ENCODE measurements at regions of chr17 and their contacts with region 1.

Region 1: GRCh38 chr17:48335858-48336500 is 94.0 kb downstream of the SKAP1 start:
- DNase-seq: no peak
- H3K4me3 ChIP-seq: no peak overlapping the region
- H3K27ac ChIP-seq: no peak overlapping the region
- H3K4me1 ChIP-seq: no peaks in the 10 kb centered on the region
- H3K27me3 ChIP-seq: peaks cover 0 to 84% (median 23%) of the 10 kb centered on the region in 4 donors
- CTCF ChIP-seq: peak; percentile 76 to 79 (median 78)
- EP300 ChIP-seq: no peak
- POLR2A ChIP-seq: no peak

Region 2: GRCh38 chr17:48394821-48395220 is 58.8 kb after region 1 on chr17:
- intact Hi-C with region 1: no loop called
- DNase-seq: no peak
- H3K4me3 ChIP-seq: no peak overlapping the region
- H3K27ac ChIP-seq: no peak overlapping the region
- H3K4me1 ChIP-seq: no peaks in the 10 kb centered on the region
- H3K27me3 ChIP-seq: peaks cover 0 to 54% (median 5%) of the 10 kb centered on the region in 4 donors
- CTCF ChIP-seq: no peak
- EP300 ChIP-seq: no peak
- POLR2A ChIP-seq: no peak

Region 3: DNA sequence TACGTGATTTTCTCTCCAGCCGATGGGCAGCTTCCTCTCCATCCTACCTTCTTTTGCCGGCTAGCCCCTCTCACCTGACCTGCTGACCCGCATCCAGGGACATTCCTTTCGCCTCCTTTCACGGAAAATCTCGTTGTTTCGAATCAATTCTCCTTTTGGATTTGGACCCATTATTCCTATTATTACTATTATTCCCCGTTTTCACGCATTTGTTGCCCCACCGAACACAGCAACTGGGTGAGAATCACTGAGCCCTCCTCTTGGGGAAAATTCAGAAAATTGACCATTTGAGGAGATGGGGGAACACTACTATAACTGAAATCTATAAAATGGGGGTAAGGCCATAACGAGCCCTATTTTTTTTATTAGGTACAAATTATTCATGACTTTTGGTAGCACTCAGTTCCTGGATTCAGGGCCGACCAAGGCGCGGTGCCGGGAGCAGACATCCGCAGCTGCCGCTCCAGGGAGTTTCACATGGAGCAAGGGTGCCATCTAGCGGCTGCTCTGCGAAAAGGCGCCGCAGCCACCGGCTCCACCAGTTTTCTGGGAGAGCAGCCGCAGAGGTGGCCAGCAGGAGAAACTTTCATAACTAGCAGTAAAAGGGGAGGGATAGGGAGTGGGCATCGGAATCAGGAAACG is 282.4 kb after region 1 on chr17:
- intact Hi-C with region 1: loop called (anchors 5 kb)
- DNase-seq: peak; percentile 96
- H3K4me3 ChIP-seq: no peak overlapping the region
- H3K27ac ChIP-seq: no peak overlapping the region
- H3K4me1 ChIP-seq: peaks cover 14 to 39% (median 31%) of the 10 kb centered on the region in 4 donors
- H3K27me3 ChIP-seq: peaks cover 19 to 100% (median 98%) of the 10 kb centered on the region in 4 donors
- CTCF ChIP-seq: peak in 2 of 3 experiments; percentile 92 to 97
- EP300 ChIP-seq: no peak
- POLR2A ChIP-seq: no peak

Measured in esophagus muscularis mucosa (tissue), 4 donors.